CD4-positive, alpha-beta memory T cell (primary cell): ENCODE measurements at regions of chr16 and their contacts with region 1.

Region 1: GRCh38 chr16:53435066-53435688 is 906 bp downstream of the RBL2 start:
- DNase-seq: peak; percentile 74 to 87 (median 78)
- H3K4me3 ChIP-seq: peak overlapping the region; percentile 85 to 92
- H3K4me3 Mint-ChIP-seq: peak overlapping the region; percentile 89 to 99 (median 96)
- H3K27ac ChIP-seq: peak overlapping the region; percentile 82
- H3K27ac Mint-ChIP-seq: peak overlapping the region; percentile 92 to 99 (median 98)
- H3K4me1 ChIP-seq: peaks cover 53% of the 10 kb centered on the region
- H3K4me1 Mint-ChIP-seq: peaks cover 19 to 57% (median 37%) of the 10 kb centered on the region in 4 donors
- H3K27me3 ChIP-seq: no peaks in the 10 kb centered on the region
- H3K27me3 Mint-ChIP-seq: no peaks in the 10 kb centered on the region

Region 2: GRCh38 chr16:53130159-53131049 is 304.8 kb before region 1 on chr16:
- CTCF ChIA-PET with region 1: no interaction called
- POLR2A ChIA-PET with region 1: interaction called, 4 read pairs
- intact Hi-C with region 1: loop called (anchors 1 kb)
- DNase-seq: peak; percentile 95 to 96 (median 96)
- H3K4me3 ChIP-seq: peak overlapping the region; percentile 36 to 64
- H3K4me3 Mint-ChIP-seq: peak overlapping the region; percentile 74 to 91 (median 84)
- H3K27ac ChIP-seq: peak overlapping the region; percentile 55
- H3K27ac Mint-ChIP-seq: peak overlapping the region; percentile 80 to 96 (median 86)
- H3K4me1 ChIP-seq: peaks cover 8% of the 10 kb centered on the region
- H3K4me1 Mint-ChIP-seq: peaks cover 9 to 19% (median 14%) of the 10 kb centered on the region in 4 donors
- H3K27me3 ChIP-seq: no peaks in the 10 kb centered on the region
- H3K27me3 Mint-ChIP-seq: no peaks in the 10 kb centered on the region

Region 3: GRCh38 chr16:53334581-53334980 is 100.6 kb before region 1 on chr16:
- CTCF ChIA-PET with region 1: no interaction called
- POLR2A ChIA-PET with region 1: no interaction called
- intact Hi-C with region 1: no loop called
- DNase-seq: no peak
- H3K4me3 ChIP-seq: no peak overlapping the region
- H3K4me3 Mint-ChIP-seq: no peak overlapping the region
- H3K27ac ChIP-seq: no peak overlapping the region
- H3K27ac Mint-ChIP-seq: no peak overlapping the region
- H3K4me1 ChIP-seq: no peaks in the 10 kb centered on the region
- H3K4me1 Mint-ChIP-seq: peaks cover 7 to 11% (median 7%) of the 10 kb centered on the region in 4 donors
- H3K27me3 ChIP-seq: no peaks in the 10 kb centered on the region
- H3K27me3 Mint-ChIP-seq: peaks cover 0 to 1% of the 10 kb centered on the region in 2 donors

Region 4: GRCh38 chr16:53449632-53450517 is 14.7 kb after region 1 on chr16:
- CTCF ChIA-PET with region 1: interaction called, 57 read pairs
- POLR2A ChIA-PET with region 1: interaction called, 364 read pairs
- intact Hi-C with region 1: no loop called
- DNase-seq: peak in 1 of 5 donors; percentile 17
- H3K4me3 ChIP-seq: peak overlapping the region in 1 of 2 donors; percentile 10
- H3K4me3 Mint-ChIP-seq: peak overlapping the region; percentile 74 to 88 (median 84)
- H3K27ac ChIP-seq: peak overlapping the region; percentile 14
- H3K27ac Mint-ChIP-seq: peak overlapping the region; percentile 77 to 90 (median 85)
- H3K4me1 ChIP-seq: peaks cover 80% of the 10 kb centered on the region
- H3K4me1 Mint-ChIP-seq: peaks cover 43 to 82% (median 61%) of the 10 kb centered on the region in 4 donors
- H3K27me3 ChIP-seq: no peaks in the 10 kb centered on the region
- H3K27me3 Mint-ChIP-seq: no peaks in the 10 kb centered on the region

Region 5: GRCh38 chr16:53465606-53466280 is 30.6 kb after region 1 on chr16:
- CTCF ChIA-PET with region 1: interaction called, 4 read pairs
- POLR2A ChIA-PET with region 1: interaction called, 23 read pairs
- intact Hi-C with region 1: loop called (anchors 5 kb)
- DNase-seq: no peak
- H3K4me3 ChIP-seq: no peak overlapping the region
- H3K4me3 Mint-ChIP-seq: peak overlapping the region in 6 of 8 donors; percentile 8 to 74 (median 30)
- H3K27ac ChIP-seq: no peak overlapping the region
- H3K27ac Mint-ChIP-seq: peak overlapping the region in 6 of 7 donors; percentile 75 to 82 (median 80)
- H3K4me1 ChIP-seq: peaks cover 57% of the 10 kb centered on the region
- H3K4me1 Mint-ChIP-seq: peaks cover 27 to 62% (median 36%) of the 10 kb centered on the region in 4 donors
- H3K27me3 ChIP-seq: no peaks in the 10 kb centered on the region
- H3K27me3 Mint-ChIP-seq: no peaks in the 10 kb centered on the region

Region 6: DNA sequence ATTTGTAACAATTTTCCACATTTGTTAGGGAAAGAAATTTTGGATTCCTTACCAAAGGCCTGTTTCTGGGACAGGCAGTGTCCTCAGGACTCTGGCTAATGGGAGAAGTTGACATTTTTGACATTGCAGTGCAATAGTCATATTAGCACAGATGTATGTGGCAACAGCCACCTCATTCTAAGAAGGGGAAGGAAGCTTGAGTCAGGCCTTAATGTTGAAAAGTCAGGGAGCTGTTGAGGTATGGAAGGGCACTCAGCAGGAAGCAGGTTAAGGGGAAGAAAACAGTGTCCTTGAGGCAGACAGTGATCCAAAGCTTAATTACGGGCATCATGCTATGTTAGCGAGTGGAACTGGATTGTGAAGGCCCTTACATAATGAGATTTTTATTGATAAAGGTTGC is 46.9 kb after region 1 on chr16:
- CTCF ChIA-PET with region 1: interaction called, 4 read pairs
- POLR2A ChIA-PET with region 1: interaction called, 19 read pairs
- intact Hi-C with region 1: no loop called
- DNase-seq: no peak
- H3K4me3 ChIP-seq: no peak overlapping the region
- H3K4me3 Mint-ChIP-seq: no peak overlapping the region
- H3K27ac ChIP-seq: no peak overlapping the region
- H3K27ac Mint-ChIP-seq: peak overlapping the region in 5 of 7 donors; percentile 19 to 65 (median 44)
- H3K4me1 ChIP-seq: peaks cover 12% of the 10 kb centered on the region
- H3K4me1 Mint-ChIP-seq: peaks cover 13 to 35% (median 22%) of the 10 kb centered on the region in 4 donors
- H3K27me3 ChIP-seq: no peaks in the 10 kb centered on the region
- H3K27me3 Mint-ChIP-seq: no peaks in the 10 kb centered on the region

Region 7: DNA sequence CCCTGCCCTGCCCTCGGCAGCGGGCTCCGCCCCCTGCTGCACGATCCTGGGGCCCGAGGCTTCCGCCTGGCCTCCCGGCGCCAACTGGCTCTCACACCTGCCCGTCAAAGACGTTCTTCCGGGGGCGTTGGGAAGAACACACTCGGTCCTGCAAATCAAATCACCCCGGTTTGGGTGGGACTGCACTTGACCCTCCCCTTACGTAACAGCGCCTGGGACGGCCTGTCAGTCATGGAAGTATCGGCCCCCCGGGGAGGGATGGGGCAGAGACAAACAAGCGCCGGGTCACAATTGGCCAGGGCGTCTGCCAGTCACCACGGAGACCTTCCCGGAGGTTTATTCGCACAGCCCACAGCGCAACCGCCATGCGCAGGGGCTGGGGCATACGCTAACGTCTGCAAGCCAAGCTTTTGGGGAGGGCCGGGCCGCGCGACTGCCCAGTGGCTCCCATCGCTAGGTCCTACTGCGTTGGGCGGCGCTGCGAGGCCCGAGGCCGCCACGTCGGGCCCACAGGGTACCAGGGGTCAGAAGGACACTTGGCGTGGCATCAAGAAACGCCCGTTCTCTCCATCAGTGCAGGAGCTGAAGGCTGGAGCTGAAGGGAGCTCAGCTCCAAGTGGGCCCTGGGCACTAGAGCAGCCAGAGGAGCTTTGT is 68.2 kb after region 1 on chr16:
- CTCF ChIA-PET with region 1: interaction called, 15 read pairs
- POLR2A ChIA-PET with region 1: interaction called, 211 read pairs
- intact Hi-C with region 1: loop called (anchors 1 kb)
- DNase-seq: peak; percentile 99 to 100 (median 100)
- H3K4me3 ChIP-seq: peak overlapping the region; percentile 40 to 83
- H3K4me3 Mint-ChIP-seq: peak overlapping the region; percentile 90 to 95 (median 92)
- H3K27ac ChIP-seq: peak overlapping the region; percentile 76
- H3K27ac Mint-ChIP-seq: peak overlapping the region; percentile 87 to 94 (median 91)
- H3K4me1 ChIP-seq: peaks cover 52% of the 10 kb centered on the region
- H3K4me1 Mint-ChIP-seq: peaks cover 38 to 61% (median 50%) of the 10 kb centered on the region in 4 donors
- H3K27me3 ChIP-seq: no peaks in the 10 kb centered on the region
- H3K27me3 Mint-ChIP-seq: no peaks in the 10 kb centered on the region

Region 8: DNA sequence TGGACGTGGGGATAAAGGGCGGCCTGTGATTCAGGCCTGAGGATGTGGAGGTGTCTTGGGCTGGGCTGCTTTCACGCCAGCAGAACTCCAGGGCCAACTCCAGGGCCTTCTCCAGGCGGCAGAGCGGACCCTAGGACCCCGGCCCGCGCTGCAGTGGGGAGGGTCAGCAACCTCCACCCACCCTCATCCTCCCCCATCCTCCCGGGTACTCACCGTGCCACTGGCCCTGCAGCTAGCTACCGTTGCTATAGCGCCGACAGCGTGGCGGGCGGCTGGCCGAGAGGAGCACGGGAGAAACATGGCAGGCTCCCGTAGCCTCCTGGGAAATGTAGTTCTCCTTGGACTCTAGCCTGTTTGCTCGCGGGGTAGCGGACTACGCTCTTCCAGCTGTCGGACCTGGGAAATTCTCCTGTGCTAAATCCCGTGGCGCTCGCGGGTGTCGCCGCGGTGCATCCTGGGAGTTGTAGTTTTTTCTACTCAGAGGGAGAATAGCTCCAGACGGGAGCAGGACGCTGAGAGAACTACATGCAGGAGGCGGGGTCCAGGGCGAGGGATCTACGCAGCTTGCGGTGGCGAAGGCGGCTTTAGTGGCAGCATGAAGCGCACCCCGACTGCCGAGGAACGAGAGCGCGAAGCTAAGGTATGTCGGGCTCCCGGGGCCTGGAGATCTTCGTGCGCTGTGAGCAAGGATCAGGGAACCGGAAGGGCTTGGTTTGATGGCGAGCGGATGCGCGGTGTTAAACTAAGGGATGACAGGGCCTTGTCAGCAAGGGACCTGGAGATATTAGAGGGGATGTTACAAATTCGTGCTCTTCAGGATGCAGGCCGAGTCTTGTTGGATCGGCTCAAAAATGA is 268.6 kb after region 1 on chr16 and contains the starts of genes FTO and RPGRIP1L:
- CTCF ChIA-PET with region 1: no interaction called
- POLR2A ChIA-PET with region 1: interaction called, 3 read pairs
- intact Hi-C with region 1: loop called (anchors 2 kb)
- DNase-seq: peak; percentile 95 to 97 (median 96)
- H3K4me3 ChIP-seq: peak within 1 kb of the TSS; percentile 54 to 85
- H3K4me3 Mint-ChIP-seq: peak within 1 kb of the TSS; percentile 96 to 100 (median 98)
- H3K27ac ChIP-seq: peak within 1 kb of the TSS; percentile 59
- H3K27ac Mint-ChIP-seq: peak within 1 kb of the TSS; percentile 90 to 99 (median 97)
- H3K4me1 ChIP-seq: peaks cover 23% of the 10 kb centered on the region
- H3K4me1 Mint-ChIP-seq: peaks cover 22 to 47% (median 36%) of the 10 kb centered on the region in 4 donors
- H3K27me3 ChIP-seq: no peaks in the 10 kb centered on the region
- H3K27me3 Mint-ChIP-seq: no peaks in the 10 kb centered on the region
- total RNA-seq, gene FTO: 61.5 to 68.8 TPM
- total RNA-seq, gene RPGRIP1L: 4.2 to 4.3 TPM